ENCODE measurements at regions of chr6 and their contacts with region 1.

Region 1: GRCh38 chr6:3324262-3324942 is 65.7 kb downstream of the PSMG4 start:
- DNase-seq: peak; percentile 93
- H3K4me3 ChIP-seq: no peak overlapping the region
- H3K27ac ChIP-seq: peak overlapping the region; percentile 89
- H3K4me1 ChIP-seq: peaks cover 23% of the 10 kb centered on the region
- H3K27me3 ChIP-seq: no peaks in the 10 kb centered on the region
- CTCF ChIP-seq: no peak
- POLR2A ChIP-seq: no peak

Region 2: GRCh38 chr6:3258720-3259490 is 65.5 kb before region 1 on chr6 and contains the start of gene PSMG4:
- CTCF ChIA-PET with region 1: no interaction called
- POLR2A ChIA-PET with region 1: no interaction called
- dilution Hi-C with region 1: no loop called
- intact Hi-C with region 1: loop called (anchors 2 kb)
- DNase-seq: peak; percentile 84
- H3K4me3 ChIP-seq: peak within 1 kb of the TSS; percentile 36 to 98 (median 41)
- H3K27ac ChIP-seq: peak within 1 kb of the TSS; percentile 10
- H3K4me1 ChIP-seq: peaks cover 7% of the 10 kb centered on the region
- H3K27me3 ChIP-seq: peaks cover 4 to 5% of the 10 kb centered on the region in 2 experiments
- CTCF ChIP-seq: no peak
- POLR2A ChIP-seq: peak; percentile 81
- total RNA-seq, gene PSMG4: 31.1 and 31.4 TPM in 2 replicates

Region 3: DNA sequence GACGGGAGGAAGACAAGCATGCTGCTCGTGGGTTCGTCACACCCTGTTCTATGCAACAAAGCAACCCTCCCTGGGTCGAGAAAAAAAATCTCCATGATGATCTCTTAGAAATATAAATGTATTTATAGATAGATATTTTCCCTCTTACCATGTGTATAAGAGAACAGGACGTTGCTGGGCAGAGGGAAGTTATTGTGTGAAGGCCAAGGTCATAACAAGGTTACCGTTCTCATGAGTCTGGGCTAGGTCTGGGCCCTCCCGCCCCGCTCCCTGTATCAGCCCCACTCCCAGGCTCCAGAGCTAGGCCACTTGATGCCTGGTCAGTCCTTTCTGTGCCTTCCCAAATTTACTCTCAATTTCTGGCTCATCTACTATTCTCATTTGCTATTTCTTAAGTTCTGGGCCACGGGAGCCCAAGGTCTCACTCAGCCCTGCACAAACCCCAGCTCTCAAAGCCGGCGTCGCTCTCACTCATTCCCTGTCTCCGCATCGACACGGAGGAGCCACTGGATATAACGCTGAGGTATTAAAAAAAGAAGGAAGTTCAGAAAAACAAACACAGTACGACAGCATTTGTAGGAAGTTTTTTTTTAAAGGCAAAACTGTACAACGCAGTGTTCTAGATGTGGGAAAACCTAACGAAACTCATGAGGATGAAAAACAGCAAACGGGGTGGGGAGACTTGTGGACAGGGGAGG is 31.1 kb after region 1 on chr6:
- CTCF ChIA-PET with region 1: interaction called, 3 read pairs
- POLR2A ChIA-PET with region 1: interaction called, 3 read pairs
- dilution Hi-C with region 1: no loop called
- intact Hi-C with region 1: loop called (anchors 2 kb)
- DNase-seq: peak; percentile 69
- H3K4me3 ChIP-seq: peak overlapping the region in 1 of 3 experiments; percentile 37
- H3K27ac ChIP-seq: peak overlapping the region; percentile 0
- H3K4me1 ChIP-seq: peaks cover 6% of the 10 kb centered on the region
- H3K27me3 ChIP-seq: no peaks in the 10 kb centered on the region
- CTCF ChIP-seq: no peak
- POLR2A ChIP-seq: no peak

Measured in endothelial cell of umbilical vein (primary cell).